ENCODE measurements at regions of chr1 and their contacts with region 1.

Region 1: GRCh38 chr1:115595279-115596079 is 46.3 kb upstream of the VANGL1 start:
- DNase-seq: peak; percentile 84
- H3K4me3 ChIP-seq: no peak overlapping the region
- H3K27ac ChIP-seq: no peak overlapping the region
- H3K4me1 ChIP-seq: peaks cover 3% of the 10 kb centered on the region
- H3K27me3 ChIP-seq: no peaks in the 10 kb centered on the region
- CTCF ChIP-seq: peak; percentile 98 to 99

Region 2: GRCh38 chr1:115041654-115042053 is 553.8 kb before region 1 on chr1:
- CTCF ChIA-PET with region 1: no interaction called
- dilution Hi-C with region 1: no loop called
- in situ Hi-C with region 1: no loop called
- intact Hi-C with region 1: loop called (anchors 5 kb)
- DNase-seq: peak; percentile 33
- H3K4me3 ChIP-seq: no peak overlapping the region
- H3K27ac ChIP-seq: no peak overlapping the region
- H3K4me1 ChIP-seq: no peaks in the 10 kb centered on the region
- H3K27me3 ChIP-seq: no peaks in the 10 kb centered on the region
- CTCF ChIP-seq: peak; percentile 62 to 83

Region 3: DNA sequence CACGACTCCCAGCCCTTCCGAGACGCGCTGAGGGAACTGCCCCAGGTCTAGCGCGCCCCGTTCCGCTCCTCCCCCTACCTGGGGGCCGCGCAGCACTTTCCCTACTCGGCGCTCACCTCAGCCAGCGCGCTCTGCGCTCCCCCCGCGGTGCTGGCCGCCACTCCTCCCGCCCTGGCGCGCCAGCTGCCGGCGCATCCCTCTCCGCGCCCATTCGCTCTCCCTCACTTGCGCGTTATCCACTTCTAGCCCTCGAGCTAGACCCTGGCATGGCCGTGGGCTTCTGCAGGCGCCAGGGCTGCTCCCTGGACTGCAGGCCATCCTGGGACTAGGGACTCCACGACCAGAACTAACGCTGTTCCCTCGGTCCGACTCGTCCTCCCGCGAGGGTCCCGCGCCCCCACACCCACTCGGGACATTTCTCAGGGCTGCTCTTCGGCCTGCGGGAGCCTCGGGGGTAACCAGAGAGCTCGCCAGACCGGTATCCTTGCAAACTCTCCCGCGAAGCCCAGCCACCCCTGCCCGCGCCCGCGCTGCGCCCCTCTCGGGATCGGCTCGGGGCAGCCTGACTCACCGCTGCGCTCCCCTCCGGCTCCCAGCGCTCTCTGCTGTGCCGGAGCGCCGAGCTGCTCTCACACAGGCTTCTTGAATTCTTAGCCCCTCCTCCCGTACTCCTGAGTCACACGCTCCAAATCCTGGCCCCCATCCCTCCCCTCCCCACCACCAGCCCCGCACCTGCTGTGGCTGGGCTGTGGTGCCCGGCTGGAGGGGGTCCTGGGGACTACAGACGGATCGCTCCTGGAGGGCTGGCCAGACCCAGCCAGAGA is 257.6 kb before region 1 on chr1 and contains the start of gene NGF:
- CTCF ChIA-PET with region 1: no interaction called
- dilution Hi-C with region 1: no loop called
- in situ Hi-C with region 1: no loop called
- intact Hi-C with region 1: loop called (anchors 5 kb)
- DNase-seq: peak; percentile 31
- H3K4me3 ChIP-seq: peak within 1 kb of the TSS; percentile 35 to 48 (median 47)
- H3K27ac ChIP-seq: no peak within 1 kb of the TSS
- H3K4me1 ChIP-seq: peaks cover 9% of the 10 kb centered on the region
- H3K27me3 ChIP-seq: no peaks in the 10 kb centered on the region
- CTCF ChIP-seq: no peak
- total RNA-seq, gene NGF: 0.17 to 1.3 TPM

Region 4: GRCh38 chr1:115506926-115507589 is 88.4 kb before region 1 on chr1:
- CTCF ChIA-PET with region 1: no interaction called
- dilution Hi-C with region 1: no loop called
- in situ Hi-C with region 1: no loop called
- intact Hi-C with region 1: loop called (anchors 1 kb)
- DNase-seq: no peak
- H3K4me3 ChIP-seq: no peak overlapping the region
- H3K27ac ChIP-seq: no peak overlapping the region
- H3K4me1 ChIP-seq: peaks cover 8% of the 10 kb centered on the region
- H3K27me3 ChIP-seq: no peaks in the 10 kb centered on the region
- CTCF ChIP-seq: peak; percentile 25 to 47

Region 5: GRCh38 chr1:115530431-115530876 is 65.0 kb before region 1 on chr1:
- CTCF ChIA-PET with region 1: no interaction called
- dilution Hi-C with region 1: no loop called
- in situ Hi-C with region 1: no loop called
- intact Hi-C with region 1: no loop called
- DNase-seq: no peak
- H3K4me3 ChIP-seq: no peak overlapping the region
- H3K27ac ChIP-seq: no peak overlapping the region
- H3K4me1 ChIP-seq: peaks cover 11% of the 10 kb centered on the region
- H3K27me3 ChIP-seq: no peaks in the 10 kb centered on the region
- CTCF ChIP-seq: no peak

Region 6: GRCh38 chr1:115753830-115754229 is 158.4 kb after region 1 on chr1:
- CTCF ChIA-PET with region 1: no interaction called
- dilution Hi-C with region 1: no loop called
- in situ Hi-C with region 1: no loop called
- intact Hi-C with region 1: no loop called
- DNase-seq: no peak
- H3K4me3 ChIP-seq: no peak overlapping the region
- H3K27ac ChIP-seq: no peak overlapping the region
- H3K4me1 ChIP-seq: peaks cover 1% of the 10 kb centered on the region
- H3K27me3 ChIP-seq: no peaks in the 10 kb centered on the region
- CTCF ChIP-seq: no peak

Region 7: GRCh38 chr1:115949156-115949555 is 353.7 kb after region 1 on chr1:
- CTCF ChIA-PET with region 1: no interaction called
- dilution Hi-C with region 1: no loop called
- in situ Hi-C with region 1: no loop called
- intact Hi-C with region 1: no loop called
- DNase-seq: peak; percentile 28
- H3K4me3 ChIP-seq: no peak overlapping the region
- H3K27ac ChIP-seq: no peak overlapping the region
- H3K4me1 ChIP-seq: no peaks in the 10 kb centered on the region
- H3K27me3 ChIP-seq: no peaks in the 10 kb centered on the region
- CTCF ChIP-seq: no peak

Measured in mammary epithelial cell (primary cell).